K562 (cell line): ENCODE measurements at regions of chr3 and their contacts with region 1.

Region 1: DNA sequence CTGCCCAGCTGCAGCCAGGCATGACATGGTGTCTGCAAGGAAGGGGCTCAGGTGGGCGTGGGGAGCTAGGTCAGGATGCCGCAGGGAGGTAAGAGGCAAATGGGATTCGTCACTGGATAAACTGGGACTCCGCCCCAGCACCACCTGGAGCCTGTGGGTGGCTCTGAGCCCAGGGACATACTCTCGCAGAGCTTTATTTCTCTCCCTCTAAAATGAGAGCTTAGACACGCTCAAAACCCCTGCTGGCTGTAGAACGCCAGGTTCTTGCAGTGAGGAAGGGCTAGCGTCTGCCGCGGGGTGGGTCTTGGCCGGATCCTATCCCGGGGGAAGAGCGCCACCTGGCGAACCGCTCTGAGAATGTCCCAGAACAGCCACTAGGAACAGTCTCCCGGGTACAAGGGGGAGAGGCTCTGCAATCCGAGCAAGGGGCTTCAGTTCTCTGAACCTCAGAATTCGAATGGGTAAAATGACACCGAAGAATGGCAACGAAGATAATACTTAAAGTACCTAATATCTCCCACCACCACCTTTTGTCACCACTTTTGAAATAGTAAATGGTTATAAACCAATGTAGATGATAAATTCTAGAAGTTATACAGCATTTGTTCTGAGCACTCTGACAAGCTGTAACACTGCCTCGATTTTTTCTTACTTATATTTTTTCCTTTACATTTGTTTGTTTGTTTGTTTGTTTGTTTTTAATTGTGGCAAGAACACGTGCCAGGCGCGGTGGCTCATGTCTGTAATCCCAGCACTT is 53.2 kb upstream of the SRGAP3 start:
- DNase-seq: peak; percentile 87 to 96 (median 90)
- ATAC-seq: peak; percentile 99
- H3K4me3 ChIP-seq: no peak overlapping the region
- H3K27ac ChIP-seq: no peak overlapping the region
- H3K4me1 ChIP-seq: no peaks in the 10 kb centered on the region; a peak in 1 of 5 replicates
- H3K27me3 ChIP-seq: peaks cover 0 to 13% of the 10 kb centered on the region in 2 experiments; a peak in 3 of 5 replicates
- CTCF ChIP-seq: peak; percentile 97 to 98 (median 98)
- EP300 ChIP-seq: no peak
- POLR2A ChIP-seq: no peak
- RAD21 ChIP-seq: peak; percentile 98

Region 2: GRCh38 chr3:8769088-8769822 is 533.3 kb before region 1 on chr3 and contains the start of gene OXTR:
- CTCF ChIA-PET with region 1: interaction called, 3 read pairs
- POLR2A ChIA-PET with region 1: no interaction called
- in situ Hi-C with region 1: no loop called
- intact Hi-C with region 1: loop called (anchors 1 kb)
- DNase-seq: peak; percentile 76 to 93 (median 90)
- ATAC-seq: peak; percentile 100
- H3K4me3 ChIP-seq: no peak within 1 kb of the TSS
- H3K27ac ChIP-seq: no peak within 1 kb of the TSS
- H3K4me1 ChIP-seq: peaks cover 0 to 12% of the 10 kb centered on the region in 2 experiments; a peak in 2 of 5 replicates
- H3K27me3 ChIP-seq: peaks cover 4 to 12% of the 10 kb centered on the region in 2 experiments
- CTCF ChIP-seq: peak; percentile 97 to 99 (median 98)
- EP300 ChIP-seq: no peak
- POLR2A ChIP-seq: no peak
- RAD21 ChIP-seq: peak; percentile 70 to 90
- polyA plus RNA-seq, gene OXTR: 0.14 to 0.22 TPM

Region 3: GRCh38 chr3:8987645-8988383 is 314.8 kb before region 1 on chr3:
- CTCF ChIA-PET with region 1: interaction called, 17 read pairs
- POLR2A ChIA-PET with region 1: interaction called, 3 read pairs
- in situ Hi-C with region 1: no loop called
- intact Hi-C with region 1: loop called (anchors 1 kb)
- DNase-seq: peak; percentile 69 to 85 (median 81)
- ATAC-seq: peak; percentile 94
- H3K4me3 ChIP-seq: no peak overlapping the region
- H3K27ac ChIP-seq: no peak overlapping the region
- H3K4me1 ChIP-seq: peaks cover 0 to 8% of the 10 kb centered on the region in 2 experiments; a peak in 2 of 5 replicates
- H3K27me3 ChIP-seq: peaks cover 49 to 81% of the 10 kb centered on the region in 2 experiments
- CTCF ChIP-seq: peak; percentile 85 to 89 (median 88)
- EP300 ChIP-seq: no peak
- POLR2A ChIP-seq: no peak
- RAD21 ChIP-seq: peak; percentile 52 to 77; a peak in 3 of 4 replicates

Region 4: GRCh38 chr3:9119331-9119730 is 183.3 kb before region 1 on chr3:
- CTCF ChIA-PET with region 1: no interaction called
- POLR2A ChIA-PET with region 1: no interaction called
- in situ Hi-C with region 1: no loop called
- intact Hi-C with region 1: loop called (anchors 5 kb)
- DNase-seq: no peak
- ATAC-seq: no peak
- H3K4me3 ChIP-seq: no peak overlapping the region
- H3K27ac ChIP-seq: no peak overlapping the region
- H3K4me1 ChIP-seq: no peaks in the 10 kb centered on the region
- H3K27me3 ChIP-seq: peaks cover 14 to 58% of the 10 kb centered on the region in 2 experiments
- CTCF ChIP-seq: no peak
- EP300 ChIP-seq: no peak
- POLR2A ChIP-seq: no peak
- RAD21 ChIP-seq: no peak

Region 5: DNA sequence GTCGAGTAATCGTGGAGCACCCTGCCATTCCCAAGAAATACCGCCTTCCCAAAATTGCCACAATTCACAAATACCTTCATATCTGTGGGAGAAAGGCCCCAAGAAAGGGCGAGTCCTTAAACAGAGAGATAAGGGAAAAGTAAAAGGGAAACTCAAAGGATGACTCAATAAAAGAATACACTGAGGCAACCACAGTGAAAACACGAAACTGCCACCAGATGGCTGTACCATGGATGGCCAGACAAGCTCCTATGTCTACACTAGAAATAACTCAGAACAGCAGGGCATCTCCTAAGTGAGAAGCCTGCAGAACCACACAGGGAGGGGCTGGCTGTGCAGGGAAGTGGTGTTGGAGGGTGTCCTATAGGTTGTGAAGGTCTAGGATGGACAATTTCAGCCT is 78.1 kb before region 1 on chr3:
- CTCF ChIA-PET with region 1: no interaction called
- POLR2A ChIA-PET with region 1: no interaction called
- in situ Hi-C with region 1: loop called (anchors 5 kb)
- intact Hi-C with region 1: loop called (anchors 5 kb)
- DNase-seq: no peak
- ATAC-seq: peak; percentile 78
- H3K4me3 ChIP-seq: no peak overlapping the region
- H3K27ac ChIP-seq: no peak overlapping the region
- H3K4me1 ChIP-seq: peaks cover 0 to 6% of the 10 kb centered on the region in 2 experiments; a peak in 2 of 5 replicates
- H3K27me3 ChIP-seq: peaks cover 15 to 56% of the 10 kb centered on the region in 2 experiments
- CTCF ChIP-seq: peak in 2 of 3 experiments; percentile 26 to 33; a peak in 2 of 6 replicates
- EP300 ChIP-seq: no peak
- POLR2A ChIP-seq: no peak
- RAD21 ChIP-seq: peak; percentile 19 to 21; a peak in 2 of 4 replicates

Region 6: GRCh38 chr3:9340472-9340902 is 37.9 kb after region 1 on chr3:
- CTCF ChIA-PET with region 1: no interaction called
- POLR2A ChIA-PET with region 1: no interaction called
- in situ Hi-C with region 1: no loop called
- intact Hi-C with region 1: no loop called
- DNase-seq: no peak
- ATAC-seq: peak; percentile 28; the same call in 1 of the 3 replicates
- H3K4me3 ChIP-seq: no peak overlapping the region
- H3K27ac ChIP-seq: no peak overlapping the region
- H3K4me1 ChIP-seq: no peaks in the 10 kb centered on the region
- H3K27me3 ChIP-seq: peaks cover 21 to 28% of the 10 kb centered on the region in 2 experiments
- CTCF ChIP-seq: no peak
- EP300 ChIP-seq: no peak
- POLR2A ChIP-seq: no peak
- RAD21 ChIP-seq: no peak